PC-3 (cell line): ENCODE measurements at regions of chr12 and their contacts with region 1.

Region 1: GRCh38 chr12:54579696-54580333 is 8.6 kb downstream of the PPP1R1A start:
- DNase-seq: peak; percentile 89
- ATAC-seq: peak; percentile 99
- H3K4me3 ChIP-seq: no peak overlapping the region
- H3K27ac ChIP-seq: no peak overlapping the region
- H3K4me1 ChIP-seq: no peaks in the 10 kb centered on the region
- H3K27me3 ChIP-seq: peaks cover 55% of the 10 kb centered on the region
- CTCF ChIP-seq: peak; percentile 94

Region 2: GRCh38 chr12:54622459-54623183 is 42.8 kb after region 1 on chr12:
- CTCF ChIA-PET with region 1: no interaction called
- POLR2A ChIA-PET with region 1: no interaction called
- intact Hi-C with region 1: loop called (anchors 2 kb)
- DNase-seq: peak; percentile 47
- ATAC-seq: peak; percentile 68
- H3K4me3 ChIP-seq: no peak overlapping the region
- H3K27ac ChIP-seq: no peak overlapping the region
- H3K4me1 ChIP-seq: no peaks in the 10 kb centered on the region
- H3K27me3 ChIP-seq: peaks cover 36% of the 10 kb centered on the region
- CTCF ChIP-seq: peak; percentile 55

Region 3: GRCh38 chr12:54840317-54840771 is 260.5 kb after region 1 on chr12:
- CTCF ChIA-PET with region 1: no interaction called
- POLR2A ChIA-PET with region 1: no interaction called
- intact Hi-C with region 1: no loop called
- DNase-seq: no peak
- ATAC-seq: no peak
- H3K4me3 ChIP-seq: no peak overlapping the region
- H3K27ac ChIP-seq: no peak overlapping the region
- H3K4me1 ChIP-seq: no peaks in the 10 kb centered on the region
- H3K27me3 ChIP-seq: peaks cover 63% of the 10 kb centered on the region
- CTCF ChIP-seq: no peak